ENCODE measurements at regions of chr7 and their contacts with region 1.

Region 1: DNA sequence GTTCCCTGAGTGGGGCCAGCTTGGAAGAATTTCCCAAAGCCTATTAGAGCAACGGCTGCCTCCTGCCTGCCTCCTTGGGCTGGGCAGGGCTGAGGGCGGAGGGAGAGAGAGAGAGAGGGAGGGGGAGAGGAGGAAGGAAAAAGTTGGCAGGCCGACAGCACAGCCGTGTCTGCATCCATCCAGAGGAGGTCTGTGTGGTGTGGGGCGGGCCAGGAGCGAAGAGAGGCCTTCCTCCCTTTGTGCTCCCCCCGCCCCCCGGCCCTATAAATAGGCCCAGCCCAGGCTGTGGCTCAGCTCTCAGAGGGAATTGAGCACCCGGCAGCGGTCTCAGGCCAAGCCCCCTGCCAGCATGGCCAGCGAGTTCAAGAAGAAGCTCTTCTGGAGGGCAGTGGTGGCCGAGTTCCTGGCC is at the start of gene AQP1:
- DNase-seq: peak; percentile 96
- H3K4me3 ChIP-seq: peak within 1 kb of the TSS; percentile 9 to 52 (median 44)
- H3K27ac ChIP-seq: peak within 1 kb of the TSS; percentile 86 to 90 (median 88)
- H3K4me1 ChIP-seq: peaks cover 0 to 94% (median 89%) of the 10 kb centered on the region in 4 donors
- H3K27me3 ChIP-seq: no peaks in the 10 kb centered on the region
- CTCF ChIP-seq: no peak
- EP300 ChIP-seq: no peak
- POLR2A ChIP-seq: peak; percentile 63 to 83
- total RNA-seq, gene AQP1: 66.0 to 191 (median 146) TPM

Region 2: DNA sequence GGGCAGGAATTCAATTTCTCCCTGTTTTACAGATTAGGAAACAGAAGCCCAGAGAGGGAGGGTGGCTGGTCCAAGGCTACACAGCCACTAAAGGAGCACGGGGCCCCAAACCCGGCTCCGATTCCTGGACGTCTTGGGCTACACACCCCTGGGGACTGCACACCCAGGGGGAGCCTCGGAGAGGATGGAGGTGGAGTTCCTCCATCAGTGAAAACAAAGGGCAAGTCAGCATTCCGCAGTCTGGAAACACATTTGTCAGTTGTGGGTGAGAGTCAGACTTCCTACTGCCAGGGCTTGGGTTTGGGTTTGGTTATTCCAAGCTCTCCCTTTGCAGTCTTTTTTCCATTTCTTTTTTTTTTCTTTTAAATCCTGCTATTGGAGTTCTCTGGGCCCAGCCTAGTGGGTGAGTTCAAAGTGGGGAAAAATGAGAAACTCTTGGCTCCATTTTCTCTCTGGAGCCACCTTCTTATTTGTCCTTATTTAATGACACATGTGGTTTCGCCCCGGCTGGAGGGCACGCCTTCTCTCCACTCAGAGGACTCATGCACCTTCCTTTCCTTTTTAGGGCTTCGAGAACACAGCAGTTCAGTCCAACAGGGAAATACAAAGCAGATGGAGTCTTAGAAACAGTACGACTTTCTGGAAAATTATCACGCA is 59.8 kb before region 1 on chr7:
- intact Hi-C with region 1: loop called (anchors 5 kb)
- DNase-seq: peak; percentile 89
- H3K4me3 ChIP-seq: peak overlapping the region in 1 of 4 donors; percentile 22
- H3K27ac ChIP-seq: peak overlapping the region; percentile 88 to 95 (median 93)
- H3K4me1 ChIP-seq: peaks cover 0 to 67% (median 43%) of the 10 kb centered on the region in 4 donors
- H3K27me3 ChIP-seq: no peaks in the 10 kb centered on the region
- CTCF ChIP-seq: no peak
- EP300 ChIP-seq: no peak
- POLR2A ChIP-seq: peak in 1 of 2 donors; percentile 26